SK-N-SH (cell line): ENCODE measurements at regions of chr17 and their contacts with region 1.

Region 1: DNA sequence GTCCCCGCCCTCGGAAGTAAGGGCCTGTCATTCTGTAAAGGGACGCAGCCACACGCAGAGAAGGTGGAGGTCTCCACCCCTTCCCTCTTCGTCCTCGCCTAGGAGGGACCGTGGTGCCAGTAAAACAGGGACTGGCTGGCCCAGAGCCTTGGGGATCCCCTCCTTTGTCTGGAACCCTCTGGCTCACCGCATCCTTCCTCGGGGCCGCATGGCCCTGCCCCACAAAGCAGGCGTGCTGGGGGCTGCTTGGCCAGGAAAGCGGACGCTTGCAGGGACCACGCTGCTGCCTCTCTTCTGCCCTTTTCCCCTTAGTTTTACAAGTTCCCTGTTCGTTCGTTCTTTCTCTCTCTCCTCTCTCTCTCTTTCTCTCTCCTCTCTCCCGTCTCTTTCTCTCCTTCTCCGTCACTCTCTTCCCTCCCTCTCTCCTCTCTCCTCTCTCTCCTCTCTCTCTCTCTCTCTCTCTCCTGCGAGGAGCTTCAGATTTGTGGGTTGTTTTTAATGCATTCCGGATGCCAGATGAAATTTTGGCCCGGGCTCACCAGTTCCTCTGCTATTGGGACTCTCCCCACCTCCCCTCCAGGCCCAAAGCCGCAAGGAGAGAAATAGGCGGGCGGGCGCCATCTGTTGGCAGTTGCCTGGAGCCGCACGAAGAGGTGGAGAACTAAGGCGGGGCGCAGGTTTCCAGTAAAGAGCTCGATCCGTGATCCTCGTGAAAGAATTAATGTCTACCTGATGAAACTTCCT is 35.1 kb upstream of the CDRT4 start:
- DNase-seq: peak; percentile 89
- H3K4me3 ChIP-seq: peak overlapping the region in 1 of 2 experiments; percentile 20; a peak in 1 of 4 replicates
- H3K27ac ChIP-seq: peak overlapping the region in 1 of 2 experiments; percentile 25; a peak in 1 of 4 replicates
- H3K4me1 ChIP-seq: peaks cover 2 to 5% of the 10 kb centered on the region in 2 experiments; a peak in 1 of 4 replicates
- H3K27me3 ChIP-seq: no peaks in the 10 kb centered on the region
- CTCF ChIP-seq: peak; percentile 95
- EP300 ChIP-seq: no peak
- RAD21 ChIP-seq: peak; percentile 90

Region 2: DNA sequence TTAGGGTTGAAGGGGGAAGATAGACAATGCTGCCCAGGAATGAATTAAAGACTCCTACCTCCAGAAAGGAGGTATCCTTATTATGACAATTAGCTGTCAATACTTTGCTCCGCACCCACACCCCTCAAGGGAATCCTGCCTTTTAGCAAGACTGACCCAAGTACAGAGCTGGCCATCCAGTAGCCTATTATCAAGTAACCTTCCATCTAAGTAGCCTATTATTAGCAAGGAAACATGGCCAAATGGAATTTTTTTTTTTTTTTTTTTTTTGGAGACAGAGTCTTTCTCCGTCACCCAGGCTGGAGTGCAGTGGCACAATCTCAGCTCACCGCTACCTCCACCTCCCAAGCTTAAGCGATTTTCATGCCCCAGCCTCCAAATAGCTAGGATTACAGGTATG is 398.8 kb before region 1 on chr17:
- CTCF ChIA-PET with region 1: no interaction called
- POLR2A ChIA-PET with region 1: no interaction called
- DNase-seq: no peak
- H3K4me3 ChIP-seq: no peak overlapping the region
- H3K27ac ChIP-seq: no peak overlapping the region
- H3K4me1 ChIP-seq: no peaks in the 10 kb centered on the region
- H3K27me3 ChIP-seq: peaks cover 5% of the 10 kb centered on the region; the same call in 1 of the 2 replicates
- CTCF ChIP-seq: no peak
- EP300 ChIP-seq: no peak
- RAD21 ChIP-seq: no peak

Region 3: GRCh38 chr17:15257258-15257788 is 245.2 kb before region 1 on chr17:
- CTCF ChIA-PET with region 1: interaction called, 359 read pairs
- POLR2A ChIA-PET with region 1: interaction called, 6 read pairs
- DNase-seq: peak; percentile 83
- H3K4me3 ChIP-seq: peak overlapping the region in 1 of 2 experiments; percentile 8; a peak in 1 of 4 replicates
- H3K27ac ChIP-seq: peak overlapping the region; percentile 8 to 47; a peak in 3 of 4 replicates
- H3K4me1 ChIP-seq: peaks cover 0 to 26% of the 10 kb centered on the region in 2 experiments; a peak in 2 of 4 replicates
- H3K27me3 ChIP-seq: no peaks in the 10 kb centered on the region
- CTCF ChIP-seq: peak; percentile 85
- EP300 ChIP-seq: peak in 1 of 2 experiments; percentile 16; a peak in 1 of 4 replicates
- RAD21 ChIP-seq: peak; percentile 73

Region 4: GRCh38 chr17:15398736-15399331 is 103.7 kb before region 1 on chr17:
- CTCF ChIA-PET with region 1: interaction called, 14 read pairs
- POLR2A ChIA-PET with region 1: no interaction called
- DNase-seq: peak; percentile 52
- H3K4me3 ChIP-seq: peak overlapping the region in 1 of 2 experiments; percentile 22; a peak in 1 of 4 replicates
- H3K27ac ChIP-seq: peak overlapping the region; percentile 70 to 93
- H3K4me1 ChIP-seq: peaks cover 17 to 24% of the 10 kb centered on the region in 2 experiments; a peak in 3 of 4 replicates
- H3K27me3 ChIP-seq: no peaks in the 10 kb centered on the region
- CTCF ChIP-seq: no peak
- EP300 ChIP-seq: peak in 1 of 2 experiments; percentile 40; a peak in 1 of 4 replicates
- RAD21 ChIP-seq: no peak

Region 5: DNA sequence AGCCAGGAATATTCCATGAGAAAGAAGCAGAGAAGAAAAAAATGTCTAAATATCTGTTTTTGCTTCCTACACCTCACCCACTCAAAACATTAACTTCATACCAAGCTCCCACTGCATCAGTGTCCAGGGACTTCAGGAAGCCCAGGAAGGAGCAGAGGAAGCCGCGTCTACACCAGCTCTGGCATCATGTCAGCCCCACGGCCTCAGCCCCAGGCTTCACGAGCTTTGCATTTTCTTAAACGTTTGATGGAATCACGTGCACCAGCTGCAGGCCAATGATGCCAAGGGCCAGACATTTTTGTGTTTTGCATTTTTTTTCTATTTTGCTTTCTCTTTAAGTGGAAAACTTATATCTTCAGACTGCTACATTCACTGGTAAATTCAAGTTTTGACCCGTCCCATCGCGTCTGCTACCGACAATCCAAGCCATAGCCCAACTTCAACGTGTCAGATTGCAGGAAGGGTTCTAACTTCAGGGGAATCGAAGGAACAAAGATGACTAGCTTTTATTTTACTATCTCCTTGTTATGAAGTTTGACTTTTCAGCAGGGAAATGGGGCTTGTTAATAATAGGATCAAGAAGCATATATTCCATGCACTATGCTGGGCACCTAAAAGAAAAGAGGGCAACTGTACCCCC is 83.6 kb before region 1 on chr17:
- CTCF ChIA-PET with region 1: no interaction called
- POLR2A ChIA-PET with region 1: no interaction called
- DNase-seq: no peak
- H3K4me3 ChIP-seq: no peak overlapping the region
- H3K27ac ChIP-seq: no peak overlapping the region
- H3K4me1 ChIP-seq: no peaks in the 10 kb centered on the region; a peak in 1 of 4 replicates
- H3K27me3 ChIP-seq: no peaks in the 10 kb centered on the region
- CTCF ChIP-seq: no peak
- EP300 ChIP-seq: no peak
- RAD21 ChIP-seq: no peak

Region 6: DNA sequence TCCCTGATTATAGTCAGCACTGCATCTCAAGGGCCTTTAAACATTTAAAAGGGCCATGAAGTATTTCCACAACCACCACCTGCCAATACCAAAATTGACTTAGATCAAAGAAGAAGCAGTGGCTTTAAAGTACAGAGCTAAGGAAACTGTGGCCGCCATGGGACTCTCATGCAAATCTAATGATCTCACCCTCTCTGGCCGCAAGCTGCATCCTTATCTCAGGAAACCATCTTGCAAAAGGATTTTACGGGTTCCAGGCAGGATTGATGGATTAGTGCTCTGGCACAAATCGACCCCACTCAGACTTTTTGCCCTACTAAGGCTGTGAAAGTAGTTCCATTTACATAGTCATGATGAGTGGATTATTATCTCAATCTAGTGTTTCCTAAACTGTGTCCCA is 57.7 kb before region 1 on chr17:
- CTCF ChIA-PET with region 1: interaction called, 10 read pairs
- POLR2A ChIA-PET with region 1: no interaction called
- DNase-seq: peak; percentile 37
- H3K4me3 ChIP-seq: no peak overlapping the region
- H3K27ac ChIP-seq: peak overlapping the region; percentile 40 to 69; a peak in 3 of 4 replicates
- H3K4me1 ChIP-seq: peaks cover 10 to 20% of the 10 kb centered on the region in 2 experiments
- H3K27me3 ChIP-seq: no peaks in the 10 kb centered on the region
- CTCF ChIP-seq: no peak
- EP300 ChIP-seq: peak; percentile 10 to 94; a peak in 3 of 4 replicates
- RAD21 ChIP-seq: no peak

Region 7: DNA sequence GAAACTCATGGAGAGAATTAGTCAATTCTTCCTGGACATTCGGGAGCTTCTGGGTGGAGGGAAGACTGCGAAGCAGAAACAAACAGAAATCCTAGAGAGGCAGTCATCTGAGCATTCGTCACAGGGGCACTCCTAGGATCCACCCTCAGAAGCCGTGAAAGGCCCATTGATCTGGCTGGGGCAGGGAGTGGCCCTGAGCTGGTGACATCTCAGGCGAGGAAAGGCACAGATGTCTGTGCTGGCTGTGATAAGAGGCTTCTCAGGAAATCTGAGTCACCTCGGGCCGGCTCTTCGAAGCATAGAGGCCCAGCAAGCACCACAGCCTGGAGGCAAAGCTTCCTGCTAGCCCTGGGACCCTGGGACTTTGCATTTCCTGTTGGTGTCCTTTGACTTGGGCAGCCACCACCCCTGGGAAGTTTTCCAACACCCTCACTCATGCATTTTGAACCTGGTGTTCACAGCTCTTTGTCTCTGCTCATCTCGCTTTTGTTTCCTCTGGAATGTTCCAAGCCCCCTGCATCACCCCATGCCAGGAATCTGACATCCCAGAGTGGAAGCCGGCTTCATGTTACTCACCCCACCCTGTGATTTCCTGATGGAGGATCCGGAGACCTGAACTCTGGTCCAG is 11.8 kb before region 1 on chr17:
- CTCF ChIA-PET with region 1: interaction called, 16 read pairs
- POLR2A ChIA-PET with region 1: no interaction called
- DNase-seq: no peak
- H3K4me3 ChIP-seq: no peak overlapping the region
- H3K27ac ChIP-seq: peak overlapping the region in 1 of 2 experiments; percentile 55; a peak in 2 of 4 replicates
- H3K4me1 ChIP-seq: peaks cover 0 to 11% of the 10 kb centered on the region in 2 experiments; a peak in 2 of 4 replicates
- H3K27me3 ChIP-seq: no peaks in the 10 kb centered on the region
- CTCF ChIP-seq: no peak
- EP300 ChIP-seq: no peak
- RAD21 ChIP-seq: no peak